Natural killer cell (primary cell): ENCODE measurements at regions of chr12 and their contacts with region 1.

Region 1: DNA sequence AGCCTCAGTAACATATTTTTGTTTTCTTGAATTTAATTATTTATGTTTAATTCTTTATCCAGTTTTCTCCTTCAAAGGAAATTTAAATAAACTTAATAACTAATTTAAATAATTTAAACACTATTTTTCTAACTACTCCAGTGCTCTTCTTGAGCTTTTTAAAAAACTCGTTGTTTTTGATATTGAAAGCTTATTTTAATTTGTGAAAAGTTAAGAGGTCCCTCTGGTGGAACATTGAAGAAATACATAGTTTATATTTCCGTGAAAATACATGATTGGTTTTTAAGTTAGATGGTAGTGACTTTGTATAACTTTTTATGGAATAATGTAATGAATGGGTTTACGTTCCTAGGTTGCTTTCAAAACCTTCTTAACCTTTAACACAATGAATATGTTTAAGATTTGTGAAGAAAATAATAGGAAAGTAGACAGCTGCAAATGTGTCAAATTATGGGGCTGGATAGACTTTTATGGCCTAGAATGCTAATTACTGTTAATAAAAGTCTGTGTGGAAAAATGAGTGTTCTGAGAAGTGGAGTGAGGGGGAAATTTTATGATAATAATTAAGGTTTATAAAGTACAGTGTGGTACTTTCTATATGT is 45.9 kb upstream of the MSRB3 start:
- DNase-seq: peak in 1 of 2 donors; percentile 52
- ATAC-seq: peak in 2 of 3 donors; percentile 57 to 58
- H3K4me3 ChIP-seq: no peak overlapping the region
- H3K4me3 Mint-ChIP-seq: no peak overlapping the region
- H3K27ac ChIP-seq: no peak overlapping the region
- H3K27ac Mint-ChIP-seq: peak overlapping the region; percentile 59 to 65
- H3K4me1 ChIP-seq: no peaks in the 10 kb centered on the region
- H3K4me1 Mint-ChIP-seq: peaks cover 14 to 20% of the 10 kb centered on the region in 2 donors
- H3K27me3 ChIP-seq: no peaks in the 10 kb centered on the region
- H3K27me3 Mint-ChIP-seq: no peaks in the 10 kb centered on the region
- CTCF ChIP-seq: peak; percentile 77

Region 2: DNA sequence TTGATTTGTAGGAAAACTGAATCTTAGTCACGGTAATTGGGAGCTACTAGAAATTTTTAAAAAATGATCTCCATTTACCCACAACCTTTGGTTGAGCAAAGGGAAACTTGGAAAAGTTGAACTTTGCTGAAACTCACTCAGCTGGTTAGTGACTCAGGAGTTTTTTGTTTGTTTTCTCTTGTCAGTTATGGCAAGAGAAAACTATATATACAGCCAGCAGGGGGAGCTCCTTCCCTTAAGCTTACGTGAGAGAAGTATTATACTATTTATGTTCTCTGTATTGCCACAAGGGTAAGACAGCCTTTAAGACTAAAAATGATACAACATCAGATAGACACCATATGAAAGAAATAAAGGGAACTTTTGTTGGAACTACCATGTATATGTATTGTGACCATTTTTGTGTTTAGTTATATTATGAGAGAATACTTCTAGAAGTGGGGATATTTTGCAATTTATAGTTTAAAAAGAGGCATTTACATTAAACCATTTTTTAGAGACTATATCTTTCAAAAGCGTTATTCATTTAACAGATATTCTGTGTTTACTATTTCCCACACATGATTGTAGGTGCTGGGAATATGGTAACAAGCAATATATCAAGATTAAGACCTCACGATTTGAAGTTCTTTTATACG is 436.2 kb before region 1 on chr12:
- intact Hi-C with region 1: loop called (anchors 2 kb)
- DNase-seq: peak; percentile 33 to 87
- ATAC-seq: peak; percentile 88 to 99 (median 99)
- H3K4me3 ChIP-seq: no peak overlapping the region
- H3K4me3 Mint-ChIP-seq: no peak overlapping the region
- H3K27ac ChIP-seq: no peak overlapping the region
- H3K27ac Mint-ChIP-seq: no peak overlapping the region
- H3K4me1 ChIP-seq: no peaks in the 10 kb centered on the region
- H3K4me1 Mint-ChIP-seq: no peaks in the 10 kb centered on the region
- H3K27me3 ChIP-seq: no peaks in the 10 kb centered on the region
- H3K27me3 Mint-ChIP-seq: peaks cover 11 to 12% of the 10 kb centered on the region in 2 donors
- CTCF ChIP-seq: peak; percentile 94

Region 3: GRCh38 chr12:64890873-64891468 is 341.6 kb before region 1 on chr12:
- intact Hi-C with region 1: loop called (anchors 1 kb)
- DNase-seq: peak in 1 of 2 donors; percentile 77
- ATAC-seq: peak; percentile 52 to 74 (median 71)
- H3K4me3 ChIP-seq: no peak overlapping the region
- H3K4me3 Mint-ChIP-seq: no peak overlapping the region
- H3K27ac ChIP-seq: no peak overlapping the region
- H3K27ac Mint-ChIP-seq: no peak overlapping the region
- H3K4me1 ChIP-seq: no peaks in the 10 kb centered on the region
- H3K4me1 Mint-ChIP-seq: peaks cover 5% of the 10 kb centered on the region in 2 donors
- H3K27me3 ChIP-seq: peaks cover 4% of the 10 kb centered on the region
- H3K27me3 Mint-ChIP-seq: peaks cover 15 to 21% of the 10 kb centered on the region in 2 donors
- CTCF ChIP-seq: peak; percentile 89

Region 4: DNA sequence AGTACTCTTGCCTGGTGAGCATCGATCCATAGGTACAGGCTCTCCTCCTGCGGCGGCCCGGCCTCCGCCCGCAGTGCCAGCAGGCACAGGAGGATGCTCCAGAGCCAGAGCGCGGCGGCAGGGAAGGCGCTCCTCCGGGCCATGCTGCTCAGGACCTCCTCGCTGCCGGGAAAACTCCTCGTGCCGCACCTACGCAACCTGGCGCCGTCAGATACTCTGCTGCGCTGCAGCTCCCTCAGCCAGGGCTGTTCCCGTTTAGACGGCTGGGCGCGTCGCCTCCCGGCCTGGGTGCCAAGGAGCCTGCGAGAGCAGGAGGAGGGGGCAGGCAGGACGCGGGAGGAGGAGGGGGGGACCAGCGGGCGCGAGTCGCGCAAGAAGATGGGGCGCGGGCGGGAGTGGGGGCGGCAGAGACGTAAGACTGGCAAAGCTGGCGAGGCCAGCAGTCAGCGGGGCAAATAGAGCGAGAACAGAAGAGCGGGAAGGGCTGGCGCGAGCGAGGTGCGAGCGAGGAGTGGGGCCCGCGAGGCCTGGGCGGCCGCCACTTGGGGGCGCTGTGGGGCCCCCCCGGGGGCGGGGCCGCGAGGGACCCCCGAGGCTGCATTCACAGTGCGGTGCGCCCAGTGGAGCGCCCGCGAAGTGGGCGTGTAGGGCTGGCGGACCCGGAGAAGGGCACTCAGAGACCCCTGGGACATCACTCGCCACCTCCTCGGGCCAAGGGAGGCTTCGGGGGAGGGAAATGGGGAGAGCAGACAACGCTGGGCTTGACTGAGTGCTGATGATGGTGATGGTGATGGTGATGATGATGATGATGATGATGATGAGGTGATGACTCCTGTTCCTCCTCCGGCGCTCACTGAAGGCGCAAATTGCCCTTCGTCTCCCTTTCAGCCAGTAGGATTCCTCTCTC is 111.3 kb before region 1 on chr12 and contains the start of gene WIF1:
- intact Hi-C with region 1: loop called (anchors 5 kb)
- DNase-seq: peak in 1 of 2 donors; percentile 23
- ATAC-seq: peak; percentile 49 to 57 (median 50)
- H3K4me3 ChIP-seq: no peak within 1 kb of the TSS
- H3K4me3 Mint-ChIP-seq: peak within 1 kb of the TSS; percentile 62
- H3K27ac ChIP-seq: no peak within 1 kb of the TSS
- H3K27ac Mint-ChIP-seq: no peak within 1 kb of the TSS
- H3K4me1 ChIP-seq: peaks cover 8% of the 10 kb centered on the region
- H3K4me1 Mint-ChIP-seq: peaks cover 7 to 9% of the 10 kb centered on the region in 2 donors
- H3K27me3 ChIP-seq: peaks cover 59% of the 10 kb centered on the region
- H3K27me3 Mint-ChIP-seq: peaks cover 35 to 40% of the 10 kb centered on the region in 2 donors
- CTCF ChIP-seq: peak; percentile 32
- total RNA-seq, gene WIF1: not detected

Region 5: DNA sequence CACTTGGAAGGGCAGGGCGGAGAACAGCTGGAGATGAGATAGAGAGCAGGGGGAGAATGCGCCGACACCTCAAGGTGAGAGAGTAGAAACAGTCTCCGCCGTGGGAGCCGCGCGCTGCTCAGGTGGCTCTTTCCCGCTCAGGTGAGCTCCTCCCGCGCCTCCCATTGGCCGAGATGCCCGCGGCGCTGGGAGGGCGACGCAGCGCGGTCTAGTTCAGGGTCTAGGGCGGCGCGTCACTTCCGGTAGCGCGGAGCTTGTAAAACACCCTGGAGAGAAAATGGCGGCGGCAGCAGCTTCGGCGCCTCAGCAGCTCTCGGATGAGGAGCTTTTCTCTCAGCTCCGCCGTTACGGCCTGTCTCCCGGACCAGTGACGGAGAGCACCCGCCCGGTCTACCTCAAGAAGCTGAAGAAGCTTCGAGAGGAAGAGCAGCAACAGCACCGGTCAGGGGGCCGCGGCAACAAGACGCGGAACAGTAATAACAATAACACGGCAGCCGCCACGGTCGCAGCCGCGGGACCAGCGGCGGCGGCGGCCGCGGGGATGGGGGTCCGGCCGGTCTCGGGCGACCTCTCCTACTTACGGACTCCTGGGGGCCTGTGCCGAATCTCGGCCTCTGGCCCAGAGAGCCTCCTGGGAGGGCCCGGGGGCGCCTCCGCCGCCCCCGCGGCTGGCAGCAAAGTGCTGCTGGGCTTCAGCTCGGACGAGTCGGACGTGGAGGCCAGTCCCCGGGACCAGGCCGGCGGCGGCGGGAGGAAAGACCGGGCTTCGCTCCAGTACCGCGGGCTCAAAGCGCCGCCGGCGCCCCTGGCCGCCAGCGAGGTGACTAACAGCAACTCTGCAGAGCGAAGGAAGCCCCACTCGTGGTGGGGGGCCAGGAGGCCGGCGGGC is 63.0 kb before region 1 on chr12 and contains the start of gene LEMD3:
- intact Hi-C with region 1: loop called (anchors 5 kb)
- DNase-seq: peak; percentile 88 to 98
- ATAC-seq: peak; percentile 81 to 93 (median 88)
- H3K4me3 ChIP-seq: peak within 1 kb of the TSS; percentile 97
- H3K4me3 Mint-ChIP-seq: peak within 1 kb of the TSS; percentile 99
- H3K27ac ChIP-seq: peak within 1 kb of the TSS; percentile 97
- H3K27ac Mint-ChIP-seq: peak within 1 kb of the TSS; percentile 99 to 100
- H3K4me1 ChIP-seq: peaks cover 11% of the 10 kb centered on the region
- H3K4me1 Mint-ChIP-seq: peaks cover 30 to 38% of the 10 kb centered on the region in 2 donors
- H3K27me3 ChIP-seq: no peaks in the 10 kb centered on the region
- H3K27me3 Mint-ChIP-seq: no peaks in the 10 kb centered on the region
- CTCF ChIP-seq: no peak
- total RNA-seq, gene LEMD3: 67.3 to 76.2 (median 71.1) TPM

Region 6: DNA sequence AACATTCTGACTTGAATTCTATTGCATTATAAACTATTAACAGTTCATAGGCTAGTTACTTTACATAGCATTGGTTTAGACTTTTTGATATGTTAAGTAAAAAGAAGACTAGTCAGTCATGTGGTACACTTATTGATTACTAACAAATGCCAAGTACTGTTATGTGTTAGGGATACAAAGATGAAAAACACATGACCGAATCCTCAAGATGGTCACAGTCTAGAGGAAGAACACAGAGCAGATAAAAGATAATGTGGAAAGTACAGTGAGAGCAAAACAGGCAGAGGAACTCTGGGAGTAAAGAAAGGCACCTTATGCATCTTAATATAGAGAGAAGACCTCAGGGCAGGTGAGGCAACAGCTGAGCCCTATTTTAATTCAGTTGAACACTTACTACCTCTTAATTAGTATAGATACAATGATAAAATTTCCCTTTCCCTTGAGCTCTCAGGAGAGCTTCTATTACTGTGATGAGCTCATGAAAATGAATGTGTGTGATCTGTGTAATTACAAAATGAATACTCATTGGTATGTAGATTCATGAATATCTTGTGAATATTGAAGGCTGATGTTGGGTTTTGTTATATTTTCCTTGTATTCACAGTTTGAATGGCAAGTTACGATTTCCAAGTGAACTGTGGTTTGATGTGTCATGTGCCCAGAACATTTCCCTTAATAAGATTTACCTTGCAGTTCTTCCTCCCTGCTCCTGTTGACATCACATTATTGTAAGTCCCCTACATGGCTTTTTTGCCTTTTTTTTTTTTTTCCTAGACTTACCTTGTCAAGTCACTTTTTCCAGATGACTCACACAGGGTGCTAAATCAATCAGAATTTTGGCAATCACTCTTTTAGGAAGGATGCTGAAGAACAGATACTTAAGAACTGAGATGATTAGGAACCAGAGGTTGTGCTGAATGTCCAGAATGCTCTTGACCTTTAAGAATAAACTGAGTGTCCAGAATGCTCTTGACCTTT is 16.4 kb after region 1 on chr12:
- intact Hi-C with region 1: no loop called
- DNase-seq: no peak
- ATAC-seq: no peak
- H3K4me3 ChIP-seq: no peak overlapping the region
- H3K4me3 Mint-ChIP-seq: no peak overlapping the region
- H3K27ac ChIP-seq: no peak overlapping the region
- H3K27ac Mint-ChIP-seq: no peak overlapping the region
- H3K4me1 ChIP-seq: no peaks in the 10 kb centered on the region
- H3K4me1 Mint-ChIP-seq: no peaks in the 10 kb centered on the region
- H3K27me3 ChIP-seq: no peaks in the 10 kb centered on the region
- H3K27me3 Mint-ChIP-seq: no peaks in the 10 kb centered on the region
- CTCF ChIP-seq: no peak